Activated B cell treated with CpG ODN at 0.5 μM for 24 hours (primary cell): ENCODE measurements at regions of chr1 and their contacts with region 1.

Region 1: GRCh38 chr1:209827384-209828262 is at the start of gene UTP25:
- DNase-seq: peak; percentile 85
- ATAC-seq: peak; percentile 91
- H3K4me3 Mint-ChIP-seq: peak within 1 kb of the TSS; percentile 97
- H3K27ac Mint-ChIP-seq: peak within 1 kb of the TSS; percentile 92
- H3K4me1 Mint-ChIP-seq: peaks cover 33% of the 10 kb centered on the region
- H3K27me3 Mint-ChIP-seq: peaks cover 7% of the 10 kb centered on the region
- CTCF ChIP-seq: no peak
- total RNA-seq, gene UTP25: 13.3 and 15.4 TPM in 2 replicates

Region 2: GRCh38 chr1:209674957-209675564 is 152.6 kb before region 1 on chr1 and contains the start of gene G0S2:
- CTCF ChIA-PET with region 1: no interaction called
- POLR2A ChIA-PET with region 1: no interaction called
- intact Hi-C with region 1: no loop called
- DNase-seq: peak; percentile 18
- ATAC-seq: peak; percentile 21
- H3K4me3 Mint-ChIP-seq: peak within 1 kb of the TSS; percentile 75
- H3K27ac Mint-ChIP-seq: peak within 1 kb of the TSS; percentile 72
- H3K4me1 Mint-ChIP-seq: peaks cover 37% of the 10 kb centered on the region
- H3K27me3 Mint-ChIP-seq: peaks cover 49% of the 10 kb centered on the region
- CTCF ChIP-seq: no peak
- total RNA-seq, gene G0S2: 2.1 and 2.3 TPM in 2 replicates

Region 3: GRCh38 chr1:209755926-209756614 is 71.6 kb before region 1 on chr1 and contains the start of gene TRAF3IP3:
- CTCF ChIA-PET with region 1: interaction called, 4 read pairs
- POLR2A ChIA-PET with region 1: interaction called, 8 read pairs
- intact Hi-C with region 1: loop called (anchors 2 kb)
- DNase-seq: peak; percentile 41
- ATAC-seq: peak; percentile 91
- H3K4me3 Mint-ChIP-seq: peak within 1 kb of the TSS; percentile 96
- H3K27ac Mint-ChIP-seq: peak within 1 kb of the TSS; percentile 99
- H3K4me1 Mint-ChIP-seq: peaks cover 85% of the 10 kb centered on the region
- H3K27me3 Mint-ChIP-seq: no peaks in the 10 kb centered on the region
- CTCF ChIP-seq: no peak
- total RNA-seq, gene TRAF3IP3: 158 and 166 TPM in 2 replicates

Region 4: GRCh38 chr1:209784265-209785169 is 43.1 kb before region 1 on chr1 and contains the start of gene C1orf74:
- CTCF ChIA-PET with region 1: interaction called, 4 read pairs
- POLR2A ChIA-PET with region 1: interaction called, 6 read pairs
- intact Hi-C with region 1: loop called (anchors 1 kb)
- DNase-seq: peak; percentile 99
- ATAC-seq: peak; percentile 98
- H3K4me3 Mint-ChIP-seq: peak within 1 kb of the TSS; percentile 99
- H3K27ac Mint-ChIP-seq: peak within 1 kb of the TSS; percentile 98
- H3K4me1 Mint-ChIP-seq: peaks cover 20% of the 10 kb centered on the region
- H3K27me3 Mint-ChIP-seq: peaks cover 10% of the 10 kb centered on the region
- CTCF ChIP-seq: no peak
- total RNA-seq, gene C1orf74: 3.7 TPM in 2 replicates

Region 5: DNA sequence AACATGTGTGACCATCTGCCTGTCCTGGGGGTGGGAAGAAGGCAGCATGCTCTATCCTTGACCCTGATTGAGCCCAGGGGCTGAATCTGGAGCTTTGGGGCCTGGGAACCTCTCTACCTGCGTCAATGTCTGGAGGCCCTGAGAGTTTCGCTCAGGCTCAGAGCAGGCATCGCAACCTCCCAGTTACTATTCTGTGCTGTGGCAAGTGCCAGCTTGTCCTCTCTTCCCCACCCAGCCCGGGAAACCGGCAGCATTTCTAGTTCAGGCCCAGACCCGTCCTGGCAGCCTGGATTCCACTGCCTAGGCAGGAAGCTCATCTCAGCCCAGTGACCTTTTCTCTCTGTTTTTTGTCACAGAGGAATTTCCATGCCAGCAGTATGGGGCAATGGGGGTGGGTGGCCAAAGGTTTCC is 11.7 kb before region 1 on chr1:
- CTCF ChIA-PET with region 1: interaction called, 17 read pairs
- POLR2A ChIA-PET with region 1: interaction called, 3 read pairs
- intact Hi-C with region 1: no loop called
- DNase-seq: no peak
- ATAC-seq: no peak
- H3K4me3 Mint-ChIP-seq: no peak overlapping the region
- H3K27ac Mint-ChIP-seq: no peak overlapping the region
- H3K4me1 Mint-ChIP-seq: no peaks in the 10 kb centered on the region
- H3K27me3 Mint-ChIP-seq: peaks cover 23% of the 10 kb centered on the region
- CTCF ChIP-seq: no peak

Region 6: GRCh38 chr1:210342986-210343780 is 515.6 kb after region 1 on chr1:
- CTCF ChIA-PET with region 1: no interaction called
- POLR2A ChIA-PET with region 1: no interaction called
- intact Hi-C with region 1: loop called (anchors 1 kb)
- DNase-seq: peak; percentile 62
- ATAC-seq: peak; percentile 90
- H3K4me3 Mint-ChIP-seq: no peak overlapping the region
- H3K27ac Mint-ChIP-seq: no peak overlapping the region
- H3K4me1 Mint-ChIP-seq: peaks cover 34% of the 10 kb centered on the region
- H3K27me3 Mint-ChIP-seq: no peaks in the 10 kb centered on the region
- CTCF ChIP-seq: no peak